ENCODE measurements at regions of chr12 and their contacts with region 1.

Region 1: DNA sequence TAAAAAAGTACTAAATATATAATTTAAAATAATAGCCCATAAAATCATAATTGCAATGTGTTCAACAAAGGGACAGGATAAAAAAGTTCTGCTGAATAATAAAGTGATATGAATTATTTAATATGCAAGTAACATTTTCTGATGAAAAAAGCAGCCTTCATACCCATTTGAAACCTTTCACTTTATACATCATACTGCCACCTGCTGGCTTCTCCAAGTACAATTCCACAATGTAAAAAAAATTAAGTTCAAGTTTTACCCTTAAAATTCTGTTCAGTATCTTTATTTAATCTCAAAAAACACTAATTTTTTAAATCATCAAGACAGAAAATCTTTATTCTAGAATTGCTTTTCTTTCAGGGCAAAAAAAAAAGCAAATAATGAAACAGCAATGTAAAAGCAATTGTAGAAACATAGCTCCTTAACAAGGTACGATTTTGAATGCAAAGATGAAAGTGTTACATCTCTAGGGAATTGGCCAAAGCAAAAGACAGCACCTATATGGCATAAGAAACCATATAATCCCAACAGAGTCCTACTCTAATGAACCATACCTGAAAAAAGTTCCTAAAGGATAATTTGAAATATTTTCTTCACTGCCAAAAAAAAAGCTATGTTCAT is 15.0 kb downstream of the MDM1 start:
- DNase-seq: peak; percentile 17

Region 2: GRCh38 chr12:68040450-68041075 is 276.6 kb before region 1 on chr12:
- CTCF ChIA-PET with region 1: interaction called, 11 read pairs
- POLR2A ChIA-PET with region 1: no interaction called
- DNase-seq: peak; percentile 76

Region 3: GRCh38 chr12:68223083-68223747 is 93.9 kb before region 1 on chr12:
- CTCF ChIA-PET with region 1: interaction called, 14 read pairs
- POLR2A ChIA-PET with region 1: no interaction called
- DNase-seq: peak; percentile 84

Region 4: GRCh38 chr12:68290126-68290525 is 27.0 kb before region 1 on chr12:
- CTCF ChIA-PET with region 1: no interaction called
- POLR2A ChIA-PET with region 1: no interaction called
- DNase-seq: no peak

Measured in HEK293T (cell line).